ENCODE measurements at regions of chr10 and their contacts with region 1.

Region 1: DNA sequence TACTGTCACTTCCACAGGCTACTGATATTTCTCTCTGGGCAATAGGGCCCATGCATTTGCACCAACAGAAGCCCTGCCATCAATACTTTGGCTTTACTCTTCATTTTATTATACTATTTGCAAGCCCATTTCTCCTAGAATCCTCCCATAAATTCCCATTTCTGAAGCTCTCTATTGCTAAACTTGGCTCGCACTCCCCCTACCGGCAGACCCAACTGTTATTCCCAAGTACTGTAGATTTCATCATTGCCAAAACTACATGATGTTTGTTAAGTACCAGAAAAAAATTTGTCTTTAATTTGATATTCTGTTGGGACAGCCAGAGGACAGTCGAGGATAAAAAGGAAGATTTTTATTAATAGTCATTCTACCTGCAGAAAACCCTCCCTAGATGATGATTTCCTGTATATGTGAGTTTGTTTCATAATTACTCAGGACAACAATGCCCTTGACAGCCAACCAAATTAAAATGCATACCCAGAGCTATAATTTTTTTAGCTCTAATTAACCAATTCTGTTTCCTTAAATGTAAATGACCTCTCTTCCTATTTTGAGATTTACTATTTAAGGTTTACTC is 298.6 kb downstream of the REEP3 start:
- DNase-seq: peak; percentile 18
- H3K4me3 ChIP-seq: no peak overlapping the region
- H3K27me3 ChIP-seq: no peaks in the 10 kb centered on the region
- CTCF ChIP-seq: peak; percentile 90

Region 2: GRCh38 chr10:63833411-63834060 is 13.7 kb after region 1 on chr10:
- CTCF ChIA-PET with region 1: interaction called, 13 read pairs
- POLR2A ChIA-PET with region 1: no interaction called
- DNase-seq: no peak
- H3K4me3 ChIP-seq: no peak overlapping the region
- H3K27me3 ChIP-seq: no peaks in the 10 kb centered on the region
- CTCF ChIP-seq: no peak

Region 3: DNA sequence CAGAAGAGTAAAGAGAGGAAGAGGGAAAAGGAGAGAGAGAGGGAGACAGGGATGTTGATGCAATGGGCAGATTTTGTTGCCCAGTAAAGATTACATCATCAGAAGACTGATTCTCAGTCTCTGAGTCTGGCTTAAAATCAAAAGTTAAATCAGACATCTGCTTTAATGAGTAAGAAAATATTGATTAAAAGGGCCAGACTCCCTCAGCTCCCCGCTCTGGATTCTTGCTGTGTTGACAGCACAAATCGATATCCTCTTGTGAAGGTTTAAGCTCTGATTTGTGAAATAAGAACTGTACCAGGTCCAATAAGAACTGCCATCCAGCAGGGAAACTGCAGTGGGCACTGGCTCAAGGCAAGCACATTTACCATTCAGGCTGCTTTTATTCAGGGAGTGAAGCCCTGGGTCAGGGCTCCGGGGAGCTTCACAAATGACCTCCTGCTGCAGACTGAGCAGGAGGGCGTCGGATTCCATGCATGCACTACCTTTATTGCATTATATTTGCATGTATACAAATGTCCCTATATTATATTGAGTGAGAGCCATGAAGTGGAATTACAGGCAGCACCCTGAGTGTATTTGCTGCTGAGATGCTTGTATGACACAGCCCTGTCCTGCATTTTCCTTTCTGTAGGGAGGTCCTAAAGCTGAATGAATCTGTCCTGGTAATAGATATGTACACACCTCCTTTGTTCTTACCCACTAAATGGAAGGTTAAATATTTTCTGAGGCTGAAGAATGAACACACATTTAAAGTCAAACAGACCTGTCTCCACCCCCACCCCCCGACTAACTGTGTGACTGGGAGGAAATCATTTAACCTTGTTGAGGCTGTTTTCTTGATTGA is 102.8 kb after region 1 on chr10:
- CTCF ChIA-PET with region 1: no interaction called
- POLR2A ChIA-PET with region 1: no interaction called
- DNase-seq: no peak
- H3K4me3 ChIP-seq: no peak overlapping the region
- H3K27me3 ChIP-seq: no peaks in the 10 kb centered on the region
- CTCF ChIP-seq: no peak

Region 4: GRCh38 chr10:63965846-63966245 is 146.0 kb after region 1 on chr10:
- CTCF ChIA-PET with region 1: no interaction called
- POLR2A ChIA-PET with region 1: no interaction called
- DNase-seq: no peak
- H3K4me3 ChIP-seq: no peak overlapping the region
- H3K27me3 ChIP-seq: no peaks in the 10 kb centered on the region
- CTCF ChIP-seq: no peak

Region 5: GRCh38 chr10:64515970-64516699 is 696.3 kb after region 1 on chr10:
- CTCF ChIA-PET with region 1: no interaction called
- POLR2A ChIA-PET with region 1: no interaction called
- DNase-seq: no peak
- H3K4me3 ChIP-seq: no peak overlapping the region
- H3K27me3 ChIP-seq: no peaks in the 10 kb centered on the region
- CTCF ChIP-seq: no peak

Measured in BJ (cell line).